KBM-7 (cell line): ENCODE measurements at regions of chr1 and their contacts with region 1.

Region 1: DNA sequence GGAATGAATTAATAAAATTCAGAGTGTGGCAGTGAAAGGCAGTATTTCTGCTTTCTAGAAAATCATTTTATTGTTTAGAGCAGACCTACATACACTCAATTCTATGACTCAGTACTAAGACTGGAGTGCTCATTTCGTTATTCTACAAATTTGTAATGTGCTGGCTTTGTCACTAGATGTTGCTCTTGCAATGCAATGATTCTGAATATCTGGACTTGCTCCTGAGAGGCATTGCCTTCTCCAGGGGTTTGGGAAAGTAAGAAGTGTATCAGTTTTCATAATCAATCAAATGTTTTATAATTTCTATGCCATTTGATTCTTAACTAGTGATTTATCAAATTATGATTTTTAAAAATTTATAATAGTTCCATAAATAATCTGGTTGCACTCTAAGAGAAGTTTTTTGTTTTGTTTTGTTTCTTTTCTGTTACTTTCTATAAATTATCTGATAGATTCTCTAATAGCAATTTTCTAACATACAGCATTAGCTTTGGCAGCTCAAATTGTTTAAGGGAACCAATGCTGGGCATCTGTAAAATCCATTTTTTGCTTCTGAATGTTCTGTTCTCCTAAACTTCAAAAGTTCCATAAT is 280.5 kb upstream of the SGIP1 start:
- DNase-seq: peak; percentile 76

Region 2: GRCh38 chr1:66331657-66332547 is 78.5 kb after region 1 on chr1:
- in situ Hi-C with region 1: no loop called
- DNase-seq: peak; percentile 64

Region 3: DNA sequence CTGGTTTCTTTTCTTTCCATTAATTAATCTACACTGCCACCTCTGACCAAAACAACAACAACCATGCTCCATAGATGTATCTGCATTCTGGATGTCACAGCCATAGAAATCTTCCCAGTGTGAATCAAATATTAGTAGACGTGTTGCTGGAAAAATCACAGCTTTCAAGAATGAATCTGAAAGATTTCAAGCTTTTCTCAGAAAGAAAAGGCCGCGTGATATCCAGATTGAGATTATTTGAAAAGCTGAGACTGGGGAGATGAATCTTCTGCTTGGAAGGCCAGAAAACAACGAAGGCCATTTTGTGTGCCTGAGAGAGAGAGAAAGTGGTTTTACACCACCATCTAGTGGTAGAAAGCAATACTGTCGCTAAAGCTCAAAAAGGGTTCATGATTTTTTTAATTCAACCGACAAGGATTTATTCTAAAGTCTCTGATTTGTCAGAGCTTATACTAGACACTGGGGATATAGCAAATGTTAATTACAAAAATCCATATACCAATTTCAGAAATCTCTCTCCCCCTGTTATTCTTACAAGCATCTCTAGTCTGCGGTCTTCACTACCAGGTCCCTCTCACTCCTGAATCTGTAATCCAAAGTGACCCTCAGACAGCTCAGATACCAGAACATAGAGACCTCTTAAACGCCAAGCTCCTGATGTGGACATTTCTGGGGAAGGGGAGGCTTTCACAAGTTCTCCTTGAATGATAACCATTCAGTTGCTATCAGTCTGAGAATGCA is 193.0 kb after region 1 on chr1:
- in situ Hi-C with region 1: loop called (anchors 10 kb)
- DNase-seq: peak; percentile 87